ENCODE measurements at regions of chr22 and their contacts with region 1.

Region 1: GRCh38 chr22:33057363-33057995 is 702 bp downstream of the SYN3 start:
- DNase-seq: no peak
- ATAC-seq: peak; percentile 26
- H3K4me3 Mint-ChIP-seq: peak overlapping the region; percentile 76
- H3K27ac Mint-ChIP-seq: no peak overlapping the region
- H3K4me1 Mint-ChIP-seq: peaks cover 69% of the 10 kb centered on the region
- H3K27me3 Mint-ChIP-seq: peaks cover 81% of the 10 kb centered on the region
- CTCF ChIP-seq: no peak

Region 2: GRCh38 chr22:33000342-33001280 is 56.9 kb before region 1 on chr22:
- CTCF ChIA-PET with region 1: interaction called, 15 read pairs
- POLR2A ChIA-PET with region 1: no interaction called
- DNase-seq: peak; percentile 89
- ATAC-seq: peak; percentile 98
- H3K4me3 Mint-ChIP-seq: no peak overlapping the region
- H3K27ac Mint-ChIP-seq: peak overlapping the region; percentile 58; the same call in 1 of the 2 replicates
- H3K4me1 Mint-ChIP-seq: peaks cover 28% of the 10 kb centered on the region
- H3K27me3 Mint-ChIP-seq: no peaks in the 10 kb centered on the region
- CTCF ChIP-seq: peak; percentile 71; the same call in 1 of the 2 replicates

Region 3: GRCh38 chr22:33028234-33028633 is 29.2 kb before region 1 on chr22:
- CTCF ChIA-PET with region 1: interaction called, 11 read pairs
- POLR2A ChIA-PET with region 1: no interaction called
- DNase-seq: no peak
- ATAC-seq: no peak
- H3K4me3 Mint-ChIP-seq: no peak overlapping the region
- H3K27ac Mint-ChIP-seq: no peak overlapping the region; the same call in 1 of the 2 replicates
- H3K4me1 Mint-ChIP-seq: peaks cover 19% of the 10 kb centered on the region
- H3K27me3 Mint-ChIP-seq: no peaks in the 10 kb centered on the region
- CTCF ChIP-seq: no peak

Region 4: GRCh38 chr22:33070600-33070999 is 13.1 kb after region 1 on chr22:
- CTCF ChIA-PET with region 1: interaction called, 22 read pairs
- POLR2A ChIA-PET with region 1: no interaction called
- DNase-seq: no peak
- ATAC-seq: no peak
- H3K4me3 Mint-ChIP-seq: no peak overlapping the region
- H3K27ac Mint-ChIP-seq: no peak overlapping the region
- H3K4me1 Mint-ChIP-seq: peaks cover 9% of the 10 kb centered on the region
- H3K27me3 Mint-ChIP-seq: peaks cover 43% of the 10 kb centered on the region
- CTCF ChIP-seq: no peak

Region 5: DNA sequence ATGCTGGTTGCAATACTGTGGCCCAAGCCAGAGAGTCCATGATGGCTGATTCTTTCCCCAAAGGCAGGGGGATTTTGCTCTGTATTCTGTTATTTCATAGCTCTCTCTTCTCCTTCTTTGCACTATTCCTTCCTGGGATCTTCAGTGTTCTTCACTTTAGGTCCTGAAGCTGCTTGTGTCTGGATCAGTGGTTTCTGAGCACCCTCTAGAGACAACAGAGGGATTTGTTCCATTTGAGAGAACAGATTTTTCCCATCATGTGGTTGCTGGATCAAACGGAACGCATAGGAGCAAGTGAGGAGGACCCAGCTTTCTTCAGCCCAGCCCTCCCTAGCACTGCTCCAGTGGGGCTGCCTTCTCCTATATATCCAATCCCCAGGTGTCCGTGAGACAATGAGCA is 69.4 kb after region 1 on chr22:
- CTCF ChIA-PET with region 1: interaction called, 10 read pairs
- POLR2A ChIA-PET with region 1: no interaction called
- DNase-seq: no peak
- ATAC-seq: peak; percentile 90
- H3K4me3 Mint-ChIP-seq: no peak overlapping the region
- H3K27ac Mint-ChIP-seq: no peak overlapping the region
- H3K4me1 Mint-ChIP-seq: no peaks in the 10 kb centered on the region
- H3K27me3 Mint-ChIP-seq: peaks cover 18% of the 10 kb centered on the region
- CTCF ChIP-seq: no peak

Region 6: DNA sequence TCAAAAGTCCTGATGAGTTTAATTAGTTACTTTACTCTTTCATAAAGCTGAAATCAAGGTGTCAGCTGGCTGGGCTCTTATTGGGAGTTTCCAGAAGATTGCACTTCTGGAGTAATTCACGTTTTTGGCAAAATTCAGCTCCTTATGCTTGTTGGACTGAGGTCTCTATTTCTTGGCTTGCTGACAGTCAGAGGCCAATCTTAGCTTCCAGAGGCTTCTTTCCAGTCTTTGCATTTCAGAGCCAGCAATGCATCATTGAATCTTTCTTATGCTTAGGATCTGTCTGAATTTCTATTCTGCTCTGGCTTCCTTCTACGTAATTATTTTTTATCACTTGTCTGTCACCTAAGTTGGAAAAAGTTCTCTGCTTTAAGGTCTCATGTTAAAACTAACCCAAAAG is 92.1 kb after region 1 on chr22:
- CTCF ChIA-PET with region 1: no interaction called
- POLR2A ChIA-PET with region 1: no interaction called
- DNase-seq: no peak
- ATAC-seq: no peak
- H3K4me3 Mint-ChIP-seq: no peak overlapping the region
- H3K27ac Mint-ChIP-seq: no peak overlapping the region
- H3K4me1 Mint-ChIP-seq: peaks cover 6% of the 10 kb centered on the region; the same call in 1 of the 2 replicates
- H3K27me3 Mint-ChIP-seq: peaks cover 8% of the 10 kb centered on the region
- CTCF ChIP-seq: no peak